Activated CD8-positive, alpha-beta T cell treated with anti-CD3 and anti-CD28 coated beads for 36 hours (primary cell): ENCODE measurements at regions of chr19 and their contacts with region 1.

Region 1: GRCh38 chr19:54168174-54168917 is 4.6 kb downstream of the TMC4 start:
- DNase-seq: peak; percentile 96
- ATAC-seq: peak; percentile 91
- H3K4me3 Mint-ChIP-seq: no peak overlapping the region
- H3K27ac Mint-ChIP-seq: no peak overlapping the region
- H3K4me1 Mint-ChIP-seq: peaks cover 13% of the 10 kb centered on the region
- H3K27me3 Mint-ChIP-seq: peaks cover 11% of the 10 kb centered on the region
- CTCF ChIP-seq: peak; percentile 83

Region 2: DNA sequence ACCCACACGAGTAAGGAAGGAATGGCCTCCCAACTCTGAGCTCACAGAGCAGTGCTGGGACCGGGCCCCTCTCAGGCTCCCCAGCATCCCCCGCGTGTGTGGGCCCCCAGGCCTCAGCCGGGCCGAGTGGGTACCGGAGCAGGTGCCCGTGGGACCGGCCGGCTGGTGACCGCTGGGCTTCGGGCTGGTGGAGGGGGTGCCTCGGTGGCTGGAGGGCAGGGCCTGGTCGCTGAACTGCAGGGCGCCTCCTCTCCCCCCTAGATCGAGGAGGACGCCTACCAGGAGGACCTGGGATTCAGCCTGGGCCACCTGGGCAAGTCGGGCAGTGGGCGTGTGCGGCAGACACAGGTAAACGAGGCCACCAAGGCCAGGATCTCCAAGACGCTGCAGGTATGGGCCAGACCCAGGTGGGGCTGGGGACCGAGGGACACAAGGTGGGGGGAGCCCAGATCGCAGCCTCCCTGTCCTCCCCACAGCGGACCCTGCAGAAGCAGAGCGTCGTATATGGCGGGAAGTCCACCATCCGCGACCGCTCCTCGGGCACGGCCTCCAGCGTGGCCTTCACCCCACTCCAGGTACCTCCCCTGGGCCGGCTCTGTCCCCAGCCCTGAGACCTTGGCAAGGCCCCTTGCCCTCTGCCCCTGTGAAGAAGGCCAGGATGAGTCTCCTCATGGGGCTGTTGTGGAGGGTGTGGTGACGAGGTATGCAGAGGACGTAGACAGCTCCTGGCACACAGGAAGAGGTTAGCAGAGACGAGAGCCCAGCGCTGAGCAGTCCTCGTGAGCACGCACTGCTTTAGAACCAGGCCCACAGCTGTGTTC is 39.3 kb before region 1 on chr19:
- CTCF ChIA-PET with region 1: no interaction called
- POLR2A ChIA-PET with region 1: no interaction called
- intact Hi-C with region 1: no loop called
- DNase-seq: no peak
- ATAC-seq: no peak
- H3K4me3 Mint-ChIP-seq: no peak overlapping the region
- H3K27ac Mint-ChIP-seq: no peak overlapping the region
- H3K4me1 Mint-ChIP-seq: no peaks in the 10 kb centered on the region
- H3K27me3 Mint-ChIP-seq: no peaks in the 10 kb centered on the region
- CTCF ChIP-seq: no peak

Region 3: GRCh38 chr19:54179921-54180461 is 11.6 kb after region 1 on chr19:
- CTCF ChIA-PET with region 1: no interaction called
- POLR2A ChIA-PET with region 1: no interaction called
- intact Hi-C with region 1: no loop called
- DNase-seq: no peak
- ATAC-seq: no peak
- H3K4me3 Mint-ChIP-seq: no peak overlapping the region
- H3K27ac Mint-ChIP-seq: no peak overlapping the region
- H3K4me1 Mint-ChIP-seq: no peaks in the 10 kb centered on the region
- H3K27me3 Mint-ChIP-seq: no peaks in the 10 kb centered on the region
- CTCF ChIP-seq: no peak

Region 4: GRCh38 chr19:54231077-54231931 is 63.0 kb after region 1 on chr19:
- CTCF ChIA-PET with region 1: interaction called, 3 read pairs
- POLR2A ChIA-PET with region 1: interaction called, 3 read pairs
- intact Hi-C with region 1: loop called (anchors 1 kb)
- DNase-seq: peak; percentile 91
- ATAC-seq: peak; percentile 99
- H3K4me3 Mint-ChIP-seq: no peak overlapping the region
- H3K27ac Mint-ChIP-seq: no peak overlapping the region
- H3K4me1 Mint-ChIP-seq: peaks cover 3% of the 10 kb centered on the region
- H3K27me3 Mint-ChIP-seq: peaks cover 24% of the 10 kb centered on the region
- CTCF ChIP-seq: peak; percentile 96